ENCODE measurements at regions of chr18 and their contacts with region 1.

Region 1: GRCh38 chr18:76398896-76399612 is 96.0 kb downstream of the ZNF516 start:
- DNase-seq: peak; percentile 42 to 67
- H3K4me3 ChIP-seq: no peak overlapping the region
- H3K4me3 Mint-ChIP-seq: no peak overlapping the region
- H3K27ac Mint-ChIP-seq: no peak overlapping the region
- H3K4me1 ChIP-seq: no peaks in the 10 kb centered on the region
- H3K4me1 Mint-ChIP-seq: no peaks in the 10 kb centered on the region
- H3K27me3 ChIP-seq: no peaks in the 10 kb centered on the region
- H3K27me3 Mint-ChIP-seq: no peaks in the 10 kb centered on the region
- CTCF ChIP-seq: peak; percentile 53 to 68

Region 2: DNA sequence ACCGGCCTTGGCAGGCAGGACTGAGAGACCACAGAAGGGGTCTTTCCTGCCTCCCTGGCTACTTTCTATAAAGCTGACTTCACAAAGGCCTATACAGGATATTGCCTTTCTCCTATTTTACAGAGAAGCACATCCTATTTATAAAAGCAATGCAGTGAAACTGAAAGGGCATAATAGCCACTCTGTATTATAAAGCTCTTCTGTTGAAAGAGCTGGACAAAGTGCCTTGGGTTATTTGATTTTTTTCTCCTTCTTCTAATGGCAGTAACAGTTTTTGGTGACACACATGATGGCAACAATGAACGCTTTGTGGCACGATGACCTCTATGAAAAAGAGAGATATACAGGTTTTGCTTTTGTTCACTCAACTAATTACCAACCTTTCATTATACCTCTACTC is 185.1 kb before region 1 on chr18:
- CTCF ChIA-PET with region 1: no interaction called
- POLR2A ChIA-PET with region 1: no interaction called
- intact Hi-C with region 1: no loop called
- DNase-seq: no peak
- H3K4me3 ChIP-seq: no peak overlapping the region
- H3K4me3 Mint-ChIP-seq: no peak overlapping the region
- H3K27ac Mint-ChIP-seq: no peak overlapping the region
- H3K4me1 ChIP-seq: no peaks in the 10 kb centered on the region
- H3K4me1 Mint-ChIP-seq: no peaks in the 10 kb centered on the region
- H3K27me3 ChIP-seq: no peaks in the 10 kb centered on the region
- H3K27me3 Mint-ChIP-seq: peaks cover 12% of the 10 kb centered on the region
- CTCF ChIP-seq: no peak

Region 3: DNA sequence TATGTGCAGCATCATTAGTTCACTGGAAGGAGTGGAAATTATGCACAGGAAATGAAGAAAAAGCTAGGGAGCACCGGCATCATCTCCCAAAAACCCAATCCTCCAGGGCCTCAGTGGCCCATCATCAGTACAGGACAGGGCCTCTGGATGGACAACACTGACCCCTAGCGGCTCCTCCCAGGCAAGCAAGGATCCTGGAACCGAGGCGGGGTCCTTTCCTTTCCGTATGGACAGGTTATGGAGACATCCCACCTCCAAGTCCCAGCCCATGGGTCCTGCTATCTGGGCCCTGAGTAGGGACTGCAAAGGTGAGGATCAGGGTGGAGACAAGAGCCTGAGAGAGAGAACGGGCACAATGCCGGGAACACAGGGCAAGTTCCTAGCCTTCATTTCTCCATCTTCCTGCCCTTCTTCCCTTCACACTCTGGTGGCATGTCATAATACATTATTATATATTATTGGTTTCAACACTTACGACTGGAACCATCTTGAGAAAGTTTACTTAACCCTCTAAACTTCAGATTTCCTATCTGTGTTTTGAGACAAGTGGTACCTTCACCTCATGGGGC is 27.8 kb after region 1 on chr18:
- CTCF ChIA-PET with region 1: no interaction called
- POLR2A ChIA-PET with region 1: no interaction called
- intact Hi-C with region 1: loop called (anchors 1 kb)
- DNase-seq: peak; percentile 37 to 40
- H3K4me3 ChIP-seq: no peak overlapping the region
- H3K4me3 Mint-ChIP-seq: no peak overlapping the region
- H3K27ac Mint-ChIP-seq: no peak overlapping the region
- H3K4me1 ChIP-seq: no peaks in the 10 kb centered on the region
- H3K4me1 Mint-ChIP-seq: no peaks in the 10 kb centered on the region
- H3K27me3 ChIP-seq: no peaks in the 10 kb centered on the region
- H3K27me3 Mint-ChIP-seq: no peaks in the 10 kb centered on the region
- CTCF ChIP-seq: peak; percentile 41 to 68

Region 4: GRCh38 chr18:76572518-76573247 is 173.6 kb after region 1 on chr18:
- CTCF ChIA-PET with region 1: no interaction called
- POLR2A ChIA-PET with region 1: no interaction called
- intact Hi-C with region 1: loop called (anchors 1 kb)
- DNase-seq: peak in 1 of 2 experiments; percentile 4
- H3K4me3 ChIP-seq: no peak overlapping the region
- H3K4me3 Mint-ChIP-seq: no peak overlapping the region
- H3K27ac Mint-ChIP-seq: peak overlapping the region; percentile 55
- H3K4me1 ChIP-seq: no peaks in the 10 kb centered on the region
- H3K4me1 Mint-ChIP-seq: no peaks in the 10 kb centered on the region
- H3K27me3 ChIP-seq: no peaks in the 10 kb centered on the region
- H3K27me3 Mint-ChIP-seq: peaks cover 2% of the 10 kb centered on the region
- CTCF ChIP-seq: no peak

Region 5: GRCh38 chr18:76686737-76687262 is 287.7 kb after region 1 on chr18:
- CTCF ChIA-PET with region 1: no interaction called
- POLR2A ChIA-PET with region 1: no interaction called
- intact Hi-C with region 1: loop called (anchors 1 kb)
- DNase-seq: peak in 1 of 2 experiments; percentile 39
- H3K4me3 ChIP-seq: no peak overlapping the region
- H3K4me3 Mint-ChIP-seq: no peak overlapping the region
- H3K27ac Mint-ChIP-seq: no peak overlapping the region
- H3K4me1 ChIP-seq: no peaks in the 10 kb centered on the region
- H3K4me1 Mint-ChIP-seq: peaks cover 4% of the 10 kb centered on the region
- H3K27me3 ChIP-seq: no peaks in the 10 kb centered on the region
- H3K27me3 Mint-ChIP-seq: peaks cover 6% of the 10 kb centered on the region
- CTCF ChIP-seq: peak in 1 of 2 experiments; percentile 38

Region 6: DNA sequence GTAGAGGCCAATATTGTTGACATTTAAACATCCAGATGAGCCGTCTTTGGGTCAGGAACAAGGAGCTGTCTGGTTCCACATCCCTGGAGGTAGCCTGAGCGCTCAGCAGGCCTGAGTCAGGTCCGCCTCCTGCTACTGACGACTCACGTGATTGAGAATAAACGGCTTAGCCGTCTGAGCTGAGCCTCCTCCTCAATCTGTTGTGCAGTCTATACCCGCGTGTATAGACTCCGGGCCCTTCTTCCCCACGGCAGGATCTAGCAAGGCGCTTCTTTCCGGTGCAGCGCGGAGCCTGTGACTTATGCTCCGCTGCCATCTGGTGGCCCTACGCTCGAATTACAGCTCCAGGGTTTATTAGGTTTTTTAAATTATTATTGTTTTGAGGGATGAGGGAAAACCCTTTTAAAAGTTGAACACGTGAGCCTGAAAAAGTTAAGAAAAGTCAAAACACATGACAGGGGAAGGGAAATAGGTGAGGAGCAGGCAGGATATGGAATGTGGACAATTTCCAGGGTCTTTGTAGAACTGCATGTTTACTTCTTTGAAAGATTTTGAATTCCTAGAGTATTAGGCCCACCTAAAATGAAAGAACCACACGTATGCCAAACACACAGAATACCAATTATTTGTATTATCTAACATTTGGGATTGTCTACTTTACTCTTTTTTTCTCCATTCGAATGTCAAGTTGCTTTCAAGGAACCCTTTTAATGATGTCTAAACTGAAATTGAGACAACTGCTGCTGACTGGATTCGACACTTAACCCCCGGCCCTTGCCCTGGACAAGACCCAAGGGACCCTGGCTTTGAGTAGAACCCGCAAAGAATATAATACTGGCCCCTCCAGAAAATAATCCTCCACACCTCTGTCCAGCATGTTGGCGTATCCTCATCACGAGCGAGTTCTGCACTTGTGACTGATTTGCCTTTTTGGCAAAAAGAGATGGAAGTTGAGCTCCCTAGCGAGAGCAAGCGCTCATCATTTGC is 310.9 kb after region 1 on chr18:
- CTCF ChIA-PET with region 1: interaction called, 3 read pairs
- POLR2A ChIA-PET with region 1: no interaction called
- intact Hi-C with region 1: loop called (anchors 1 kb)
- DNase-seq: peak; percentile 23 to 41
- H3K4me3 ChIP-seq: no peak overlapping the region
- H3K4me3 Mint-ChIP-seq: no peak overlapping the region
- H3K27ac Mint-ChIP-seq: no peak overlapping the region
- H3K4me1 ChIP-seq: no peaks in the 10 kb centered on the region
- H3K4me1 Mint-ChIP-seq: no peaks in the 10 kb centered on the region
- H3K27me3 ChIP-seq: no peaks in the 10 kb centered on the region
- H3K27me3 Mint-ChIP-seq: no peaks in the 10 kb centered on the region
- CTCF ChIP-seq: peak; percentile 37 to 60

Measured in Caco-2 (cell line).